Activated CD4-positive, alpha-beta memory T cell treated with anti-CD3 and anti-CD28 coated beads, Interleukin-2, amount 10 ng/mL, durations not matched to agents 7 days and 5 days (primary cell): ENCODE measurements at regions of chr1 and their contacts with region 1.

Region 1: GRCh38 chr1:7667625-7668218 is 103.4 kb upstream of the VAMP3 start:
- DNase-seq: peak; percentile 83
- H3K4me3 Mint-ChIP-seq: no peak overlapping the region
- H3K27ac Mint-ChIP-seq: no peak overlapping the region
- H3K4me1 Mint-ChIP-seq: no peaks in the 10 kb centered on the region
- H3K27me3 Mint-ChIP-seq: no peaks in the 10 kb centered on the region

Region 2: GRCh38 chr1:6727535-6727934 is 940.2 kb before region 1 on chr1:
- CTCF ChIA-PET with region 1: no interaction called
- POLR2A ChIA-PET with region 1: no interaction called
- DNase-seq: peak; percentile 52
- H3K4me3 Mint-ChIP-seq: no peak overlapping the region
- H3K27ac Mint-ChIP-seq: no peak overlapping the region
- H3K4me1 Mint-ChIP-seq: no peaks in the 10 kb centered on the region
- H3K27me3 Mint-ChIP-seq: peaks cover 12% of the 10 kb centered on the region

Region 3: GRCh38 chr1:7680207-7680954 is 12.7 kb after region 1 on chr1:
- CTCF ChIA-PET with region 1: interaction called, 27 read pairs
- POLR2A ChIA-PET with region 1: no interaction called
- DNase-seq: peak; percentile 23
- H3K4me3 Mint-ChIP-seq: peak overlapping the region; percentile 64
- H3K27ac Mint-ChIP-seq: no peak overlapping the region
- H3K4me1 Mint-ChIP-seq: no peaks in the 10 kb centered on the region
- H3K27me3 Mint-ChIP-seq: peaks cover 13% of the 10 kb centered on the region

Region 4: GRCh38 chr1:7704214-7705047 is 36.7 kb after region 1 on chr1:
- CTCF ChIA-PET with region 1: interaction called, 11 read pairs
- POLR2A ChIA-PET with region 1: no interaction called
- DNase-seq: peak; percentile 92
- H3K4me3 Mint-ChIP-seq: peak overlapping the region; percentile 52
- H3K27ac Mint-ChIP-seq: no peak overlapping the region
- H3K4me1 Mint-ChIP-seq: peaks cover 10% of the 10 kb centered on the region
- H3K27me3 Mint-ChIP-seq: peaks cover 72% of the 10 kb centered on the region

Region 5: GRCh38 chr1:7752512-7753417 is 85.0 kb after region 1 on chr1:
- CTCF ChIA-PET with region 1: interaction called, 281 read pairs
- POLR2A ChIA-PET with region 1: interaction called, 19 read pairs
- DNase-seq: peak; percentile 48
- H3K4me3 Mint-ChIP-seq: no peak overlapping the region
- H3K27ac Mint-ChIP-seq: no peak overlapping the region
- H3K4me1 Mint-ChIP-seq: peaks cover 40% of the 10 kb centered on the region
- H3K27me3 Mint-ChIP-seq: peaks cover 9% of the 10 kb centered on the region

Region 6: GRCh38 chr1:7760245-7760644 is 92.5 kb after region 1 on chr1:
- CTCF ChIA-PET with region 1: interaction called, 281 read pairs
- POLR2A ChIA-PET with region 1: interaction called, 3 read pairs
- DNase-seq: no peak
- H3K4me3 Mint-ChIP-seq: no peak overlapping the region
- H3K27ac Mint-ChIP-seq: no peak overlapping the region
- H3K4me1 Mint-ChIP-seq: no peaks in the 10 kb centered on the region
- H3K27me3 Mint-ChIP-seq: peaks cover 11% of the 10 kb centered on the region

Region 7: GRCh38 chr1:7899741-7900140 is 232.0 kb after region 1 on chr1:
- CTCF ChIA-PET with region 1: interaction called, 17 read pairs
- POLR2A ChIA-PET with region 1: no interaction called
- DNase-seq: no peak
- H3K4me3 Mint-ChIP-seq: no peak overlapping the region
- H3K27ac Mint-ChIP-seq: peak overlapping the region; percentile 16
- H3K4me1 Mint-ChIP-seq: peaks cover 14% of the 10 kb centered on the region
- H3K27me3 Mint-ChIP-seq: peaks cover 2% of the 10 kb centered on the region